ENCODE measurements at regions of chr6 and their contacts with region 1.

Region 1: DNA sequence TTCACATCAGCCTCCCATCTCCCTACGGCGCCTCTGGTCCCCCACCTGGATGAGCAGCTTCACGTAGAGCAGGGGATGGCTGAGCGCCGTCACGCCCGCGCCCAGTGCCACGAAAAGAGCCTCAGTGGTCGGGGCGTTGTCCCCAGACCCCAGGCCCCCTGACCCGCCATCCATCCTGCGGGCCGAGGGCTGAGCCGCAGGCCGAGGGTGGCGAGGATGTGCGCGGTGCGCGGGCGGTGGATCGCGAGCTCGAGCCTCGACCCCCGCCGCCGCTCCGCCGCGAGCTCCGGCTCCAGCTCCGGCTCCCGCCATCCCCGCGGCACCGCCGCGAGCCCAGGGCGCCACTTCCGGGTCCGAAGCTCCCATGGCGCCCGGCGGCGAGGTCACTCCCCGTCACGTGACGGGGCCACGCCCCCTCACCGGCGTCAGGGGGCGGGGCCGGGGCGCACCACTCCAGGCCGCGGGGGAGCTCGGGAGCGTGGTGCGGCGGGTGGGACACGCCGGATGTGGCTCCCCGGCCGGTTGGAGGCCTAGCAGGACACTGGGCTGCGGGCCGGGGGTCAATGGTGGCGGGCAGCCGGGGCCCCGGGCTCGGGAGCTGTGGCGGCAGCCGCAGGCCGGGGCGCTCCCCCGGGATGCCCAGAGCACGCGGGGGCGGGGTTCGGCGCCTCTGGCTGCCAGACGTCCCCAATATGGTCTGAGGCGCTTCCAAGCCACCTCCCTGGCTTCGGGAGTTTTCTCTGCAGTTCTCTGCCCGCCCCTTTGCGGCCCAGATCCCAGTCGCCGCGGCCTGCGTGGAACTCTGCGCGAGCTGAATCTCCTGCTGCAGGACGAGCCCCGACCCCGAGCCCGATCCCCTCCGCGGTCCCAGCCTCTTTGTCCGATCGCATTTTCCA is at the start of gene MTCH1:
- DNase-seq: peak; percentile 87
- H3K4me3 Mint-ChIP-seq: peak within 1 kb of the TSS; percentile 99
- H3K27ac Mint-ChIP-seq: peak within 1 kb of the TSS; percentile 99
- H3K4me1 Mint-ChIP-seq: peaks cover 27% of the 10 kb centered on the region
- H3K27me3 Mint-ChIP-seq: peaks cover 10% of the 10 kb centered on the region
- total RNA-seq, gene MTCH1: 120 and 127 TPM in 2 replicates

Region 2: DNA sequence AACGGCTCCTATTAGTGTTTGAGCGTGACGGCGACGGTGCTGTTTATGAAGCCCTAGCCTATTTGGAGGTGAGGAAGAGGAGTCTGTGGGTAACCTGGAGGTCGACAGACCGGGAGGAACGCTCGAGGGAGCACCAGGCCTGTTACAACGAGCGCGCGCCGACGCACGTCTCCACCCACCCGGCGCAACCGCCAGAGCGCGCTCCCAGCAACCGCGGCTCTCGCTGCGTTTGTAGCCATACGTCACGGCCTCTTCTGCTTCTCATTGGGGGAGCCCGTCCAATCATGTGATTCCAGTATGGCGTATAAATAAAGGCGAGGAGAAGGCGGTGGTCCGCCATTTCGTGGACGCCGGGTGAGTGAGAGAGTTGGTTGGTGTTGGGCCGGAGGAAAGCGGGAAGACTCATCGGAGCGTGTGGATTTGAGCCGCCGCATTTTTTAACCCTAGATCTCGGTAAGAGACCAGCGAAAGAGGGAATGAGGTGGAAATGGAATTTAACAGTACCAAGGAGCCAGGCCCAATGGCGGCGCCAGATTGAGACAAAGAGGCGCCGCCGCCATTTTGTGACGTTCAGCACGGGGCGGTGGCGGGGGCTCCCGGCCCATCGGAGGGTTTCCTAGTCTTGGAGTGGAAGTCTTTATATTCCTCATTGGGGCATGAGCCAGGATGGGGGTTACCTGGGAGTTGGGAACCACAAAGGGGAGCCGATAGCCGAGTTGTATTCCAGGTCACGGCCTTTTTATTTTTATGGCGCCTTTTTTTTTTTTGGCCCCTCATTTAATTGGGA is 391.8 kb before region 1 on chr6 and contains the start of gene SRSF3:
- intact Hi-C with region 1: loop called (anchors 10 kb)
- DNase-seq: peak; percentile 96
- H3K4me3 Mint-ChIP-seq: peak within 1 kb of the TSS; percentile 97
- H3K27ac Mint-ChIP-seq: peak within 1 kb of the TSS; percentile 100
- H3K4me1 Mint-ChIP-seq: peaks cover 44% of the 10 kb centered on the region
- H3K27me3 Mint-ChIP-seq: no peaks in the 10 kb centered on the region
- total RNA-seq, gene SRSF3: 525 and 546 TPM in 2 replicates

Region 3: GRCh38 chr6:36874443-36875249 is 111.4 kb before region 1 on chr6 and contains the start of gene PPIL1:
- intact Hi-C with region 1: loop called (anchors 1 kb)
- DNase-seq: peak; percentile 75
- H3K4me3 Mint-ChIP-seq: peak within 1 kb of the TSS; percentile 93
- H3K27ac Mint-ChIP-seq: peak within 1 kb of the TSS; percentile 99
- H3K4me1 Mint-ChIP-seq: peaks cover 47% of the 10 kb centered on the region
- H3K27me3 Mint-ChIP-seq: peaks cover 2% of the 10 kb centered on the region
- total RNA-seq, gene PPIL1: 60.2 and 62.6 TPM in 2 replicates

Region 4: GRCh38 chr6:36885461-36886401 is 100.3 kb before region 1 on chr6 and contains the start of gene C6orf89:
- intact Hi-C with region 1: loop called (anchors 1 kb)
- DNase-seq: peak; percentile 94
- H3K4me3 Mint-ChIP-seq: peak within 1 kb of the TSS; percentile 91
- H3K27ac Mint-ChIP-seq: peak within 1 kb of the TSS; percentile 82
- H3K4me1 Mint-ChIP-seq: peaks cover 37% of the 10 kb centered on the region
- H3K27me3 Mint-ChIP-seq: no peaks in the 10 kb centered on the region
- total RNA-seq, gene C6orf89: 31.5 and 31.8 TPM in 2 replicates

Region 5: GRCh38 chr6:36924131-36924530 is 61.9 kb before region 1 on chr6:
- intact Hi-C with region 1: loop called (anchors 2 kb)
- DNase-seq: no peak
- H3K4me3 Mint-ChIP-seq: no peak overlapping the region
- H3K27ac Mint-ChIP-seq: peak overlapping the region; percentile 50
- H3K4me1 Mint-ChIP-seq: peaks cover 46% of the 10 kb centered on the region
- H3K27me3 Mint-ChIP-seq: no peaks in the 10 kb centered on the region

Region 6: GRCh38 chr6:36962874-36963273 is 23.2 kb before region 1 on chr6:
- intact Hi-C with region 1: loop called (anchors 1 kb)
- DNase-seq: peak; percentile 83
- H3K4me3 Mint-ChIP-seq: peak overlapping the region; percentile 38
- H3K27ac Mint-ChIP-seq: peak overlapping the region; percentile 86
- H3K4me1 Mint-ChIP-seq: peaks cover 38% of the 10 kb centered on the region
- H3K27me3 Mint-ChIP-seq: no peaks in the 10 kb centered on the region